ENCODE measurements at regions of chr5 and their contacts with region 1.

Region 1: DNA sequence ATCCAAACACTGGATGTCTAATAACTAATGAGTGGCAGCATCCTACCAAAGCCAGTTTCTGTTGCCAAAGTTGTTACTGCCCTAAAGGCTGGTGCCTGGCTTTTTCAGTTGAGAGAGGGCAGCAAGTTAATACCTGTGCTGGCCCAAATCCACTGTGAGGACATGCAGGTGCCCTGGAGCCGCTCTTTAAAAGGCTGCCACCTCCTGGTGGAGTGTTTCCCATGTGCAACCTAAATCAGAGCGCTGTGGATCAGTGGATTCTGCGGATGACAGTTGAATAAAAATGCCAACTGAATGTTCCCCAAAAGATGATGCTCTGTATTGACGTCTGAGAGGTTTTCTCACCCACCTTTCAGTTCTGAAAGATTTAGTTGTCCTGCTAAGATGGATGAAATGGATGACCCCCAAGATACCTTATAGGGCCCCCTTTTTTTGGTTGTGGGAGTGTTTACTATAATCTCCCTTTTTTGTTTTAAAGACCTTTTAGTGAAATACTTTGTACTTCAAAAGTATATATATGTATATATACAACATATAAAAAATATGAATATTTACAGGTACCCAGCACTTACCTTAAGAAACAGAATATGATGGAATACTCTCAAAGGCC is 146.4 kb downstream of the EGFLAM start:
- DNase-seq: no peak
- ATAC-seq: no peak
- H3K4me3 ChIP-seq: no peak overlapping the region
- H3K27ac ChIP-seq: no peak overlapping the region
- H3K4me1 ChIP-seq: no peaks in the 10 kb centered on the region
- H3K27me3 ChIP-seq: peaks cover 0 to 10% (median 0%) of the 10 kb centered on the region in 9 donors
- CTCF ChIP-seq: peak in 4 of 12 donors; percentile 5 to 41 (median 22)
- POLR2A ChIP-seq: no peak

Region 2: DNA sequence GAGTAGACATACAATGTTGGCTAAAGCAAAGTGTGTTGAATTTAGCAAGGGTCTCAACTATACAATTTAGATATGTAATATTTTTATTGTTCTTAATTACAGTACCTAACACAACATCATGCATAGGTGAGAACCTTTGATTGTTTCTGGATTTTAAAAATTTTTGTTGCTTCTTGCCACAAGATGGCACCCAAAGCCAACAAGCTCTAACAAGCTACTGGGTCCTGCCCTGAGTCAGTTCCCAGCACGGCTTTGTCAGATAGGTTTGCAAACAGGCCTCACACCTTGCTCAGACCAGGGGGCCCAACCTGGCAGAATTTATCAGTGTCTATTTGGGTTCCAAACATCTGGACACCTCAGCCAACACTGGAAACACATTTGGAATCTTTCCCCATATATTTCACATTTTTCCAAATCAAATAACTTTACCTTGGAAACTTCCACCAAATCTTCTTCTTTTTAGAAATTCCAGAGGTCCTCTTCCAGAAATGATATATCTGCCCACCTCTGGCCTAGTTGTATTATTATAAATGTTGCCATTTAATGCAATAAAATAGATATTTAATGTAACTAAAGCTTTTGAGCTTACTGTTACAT is 195.9 kb before region 1 on chr5:
- intact Hi-C with region 1: loop called in 1 of 10 experiments (anchors 10 kb)
- DNase-seq: peak in 2 of 5 donors; percentile 17 to 32
- ATAC-seq: peak in 3 of 4 donors; percentile 34 to 46 (median 39)
- H3K4me3 ChIP-seq: no peak overlapping the region
- H3K27ac ChIP-seq: no peak overlapping the region
- H3K4me1 ChIP-seq: no peaks in the 10 kb centered on the region
- H3K27me3 ChIP-seq: peaks cover 0 to 9% (median 0%) of the 10 kb centered on the region in 9 donors
- CTCF ChIP-seq: peak; percentile 7 to 63 (median 44)
- POLR2A ChIP-seq: no peak

Measured in heart left ventricle (tissue), 16 donors.